HAP-1 (cell line): ENCODE measurements at regions of chr7 and their contacts with region 1.

Region 1: DNA sequence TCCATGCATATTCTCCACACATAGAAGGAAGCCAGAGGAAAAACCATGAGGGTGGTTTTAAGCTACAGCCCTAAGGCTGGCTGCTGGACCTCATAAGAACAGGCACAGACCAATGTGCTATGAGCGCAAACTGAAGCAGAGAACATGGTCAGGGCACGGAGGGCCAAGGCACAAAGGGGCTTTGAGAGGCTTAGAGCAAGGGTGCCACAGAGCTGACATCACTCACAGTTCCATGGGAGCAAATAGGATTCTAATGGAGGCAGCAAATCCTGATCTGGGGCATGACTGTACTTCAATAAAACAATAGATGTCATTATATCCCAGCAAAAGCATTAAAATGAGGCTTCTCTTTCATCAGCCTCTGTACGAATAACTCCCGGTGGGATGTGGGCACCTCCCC is 162.4 kb downstream of the COBL start:
- DNase-seq: no peak
- H3K4me3 ChIP-seq: no peak overlapping the region
- H3K4me1 ChIP-seq: peaks cover 15% of the 10 kb centered on the region
- H3K27me3 ChIP-seq: no peaks in the 10 kb centered on the region

Region 2: DNA sequence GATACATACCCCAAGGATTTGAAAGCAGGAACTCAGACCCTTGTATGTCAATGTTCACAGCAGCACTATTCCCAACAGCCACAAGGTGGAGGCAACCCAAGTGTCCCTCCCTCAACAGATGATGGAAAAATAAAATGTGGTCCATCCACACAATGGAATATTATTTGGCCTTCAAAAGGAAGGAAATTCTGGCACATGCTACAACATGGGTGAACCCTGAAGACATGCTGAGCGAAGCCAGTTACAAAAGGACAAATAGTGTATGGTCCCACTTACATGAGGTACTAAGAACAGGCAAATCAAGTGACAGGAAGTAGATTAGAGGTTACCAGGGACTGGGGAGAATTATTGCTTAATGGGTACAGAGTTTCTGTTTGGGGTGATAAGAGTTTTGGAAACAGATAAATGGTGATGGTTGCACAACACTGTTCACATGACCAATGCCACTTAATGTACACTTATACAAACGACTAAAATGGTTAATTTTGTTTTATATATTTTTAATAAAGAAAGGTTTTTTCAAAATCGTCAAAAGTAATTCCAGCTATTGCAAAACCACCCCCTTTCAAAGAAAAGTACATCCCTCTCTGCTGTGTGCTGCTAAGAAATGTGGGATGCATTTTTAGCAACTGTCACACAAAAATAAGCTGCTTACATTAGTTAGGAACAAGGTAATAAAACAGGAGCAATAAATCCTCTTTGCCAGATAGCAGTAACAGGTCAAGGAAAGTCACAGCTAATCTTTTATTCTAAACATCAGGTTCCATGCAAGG is 457.2 kb before region 1 on chr7:
- in situ Hi-C with region 1: no loop called
- DNase-seq: peak in 1 of 2 experiments; percentile 31
- H3K4me3 ChIP-seq: no peak overlapping the region
- H3K4me1 ChIP-seq: peaks cover 3% of the 10 kb centered on the region; the same call in 1 of the 2 replicates
- H3K27me3 ChIP-seq: no peaks in the 10 kb centered on the region

Region 3: GRCh38 chr7:50782384-50783208 is 371.6 kb before region 1 on chr7 and contains the start of gene GRB10:
- in situ Hi-C with region 1: loop called (anchors 10 kb)
- DNase-seq: peak; percentile 62 to 85
- H3K4me3 ChIP-seq: peak within 1 kb of the TSS; percentile 49
- H3K4me1 ChIP-seq: peaks cover 12% of the 10 kb centered on the region
- H3K27me3 ChIP-seq: no peaks in the 10 kb centered on the region